RWPE1 (cell line): ENCODE measurements at regions of chr9 and their contacts with region 1.

Region 1: DNA sequence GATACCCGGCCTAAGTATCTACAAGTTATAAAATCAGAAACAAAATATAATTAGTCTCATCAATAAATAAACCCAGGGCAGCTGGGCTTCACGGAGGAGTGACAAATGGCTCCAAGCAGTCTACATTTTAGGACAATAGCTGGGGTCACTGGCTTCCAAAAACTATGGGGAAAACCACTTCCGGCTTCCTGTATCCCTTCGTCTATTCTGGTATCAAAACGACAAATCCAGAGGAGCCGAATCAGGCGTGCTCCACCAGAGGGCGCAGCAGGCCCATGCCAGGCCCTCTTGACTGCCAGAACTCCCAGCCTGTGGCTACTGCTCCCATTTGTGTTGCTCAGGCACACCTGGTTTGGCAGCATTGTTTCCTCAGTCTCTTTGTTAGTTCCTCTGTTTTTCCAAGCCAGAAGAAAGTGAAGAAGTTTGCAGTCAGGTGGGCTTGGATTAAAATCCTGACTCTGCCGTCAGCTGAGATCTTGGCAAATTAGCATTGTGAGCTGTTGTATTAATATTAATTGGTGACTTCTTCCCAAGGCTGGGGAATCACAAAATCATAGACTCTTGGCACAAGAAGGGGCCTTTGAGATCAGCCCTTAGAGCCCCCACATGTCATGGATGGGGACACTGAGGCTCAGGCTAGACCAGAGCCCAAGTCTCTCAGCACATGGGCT is 11.6 kb upstream of the RAB14 start:
- DNase-seq: peak; percentile 93
- H3K27ac ChIP-seq: peak overlapping the region; percentile 27; the same call in 1 of the 2 replicates
- CTCF ChIP-seq: peak; percentile 99

Region 2: GRCh38 chr9:121201738-121202533 is 11.3 kb before region 1 on chr9 and contains the start of gene RAB14:
- CTCF ChIA-PET with region 1: interaction called, 12 read pairs
- POLR2A ChIA-PET with region 1: interaction called, 3 read pairs
- DNase-seq: peak; percentile 100
- H3K27ac ChIP-seq: peak within 1 kb of the TSS; percentile 94
- CTCF ChIP-seq: peak; percentile 91

Region 3: DNA sequence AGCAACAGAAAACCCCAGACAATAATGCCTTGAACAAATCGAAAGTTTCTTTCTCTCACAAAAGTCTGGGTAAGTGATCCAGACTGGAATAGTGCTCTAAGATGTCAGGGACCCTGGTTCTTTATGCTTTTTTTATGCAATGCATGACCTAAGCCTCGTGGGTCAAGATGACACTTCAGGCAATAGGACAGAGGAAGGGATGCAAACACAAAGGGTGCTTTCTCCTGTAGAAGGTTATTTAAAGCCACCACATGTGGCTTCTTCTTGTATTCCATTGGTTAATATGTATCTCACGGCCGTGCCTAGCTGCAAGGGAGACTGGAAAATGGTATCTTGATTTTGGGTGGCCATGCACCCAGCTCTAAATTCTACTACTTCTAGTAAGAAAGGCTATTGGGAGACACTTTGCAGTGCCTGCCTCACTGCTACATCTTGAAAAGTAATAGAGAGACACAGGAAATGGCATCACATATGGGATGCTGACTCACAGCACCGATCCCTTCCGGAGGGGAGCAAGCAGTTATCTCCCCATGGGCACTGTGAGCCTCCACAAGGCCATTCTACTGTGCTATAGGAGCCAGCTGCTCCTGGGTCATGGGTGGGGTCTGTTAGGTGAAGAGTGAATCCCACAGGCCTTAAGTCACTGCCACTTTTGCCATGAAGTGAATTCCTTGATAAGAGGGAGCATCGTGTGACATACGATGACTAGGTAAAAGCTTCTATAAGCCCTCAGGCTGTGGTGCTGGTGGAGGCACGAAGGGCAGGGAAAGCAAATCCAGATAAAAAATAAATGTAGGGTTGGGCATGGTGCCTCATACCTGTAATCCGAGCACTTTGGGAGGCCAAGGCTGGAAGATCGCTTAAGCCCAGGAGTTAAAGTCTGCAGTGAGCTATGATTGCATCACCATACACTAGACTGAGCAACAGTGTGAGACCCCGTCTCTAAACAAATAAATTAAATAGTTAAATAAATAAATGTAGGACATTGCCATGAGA is 20.9 kb after region 1 on chr9:
- CTCF ChIA-PET with region 1: interaction called, 16 read pairs
- POLR2A ChIA-PET with region 1: no interaction called
- DNase-seq: peak; percentile 87
- H3K27ac ChIP-seq: peak overlapping the region; percentile 83
- CTCF ChIP-seq: no peak

Region 4: GRCh38 chr9:121278535-121279261 is 65.4 kb after region 1 on chr9:
- CTCF ChIA-PET with region 1: interaction called, 10 read pairs
- POLR2A ChIA-PET with region 1: interaction called, 5 read pairs
- DNase-seq: peak; percentile 94
- H3K27ac ChIP-seq: peak overlapping the region; percentile 98
- CTCF ChIP-seq: peak; percentile 97

Region 5: GRCh38 chr9:121399883-121400607 is 186.8 kb after region 1 on chr9:
- CTCF ChIA-PET with region 1: interaction called, 24 read pairs
- POLR2A ChIA-PET with region 1: no interaction called
- DNase-seq: peak; percentile 78
- H3K27ac ChIP-seq: no peak overlapping the region
- CTCF ChIP-seq: peak; percentile 78